Naive thymus-derived CD8-positive, alpha-beta T cell (primary cell): ENCODE measurements at regions of chr6 and their contacts with region 1.

Region 1: DNA sequence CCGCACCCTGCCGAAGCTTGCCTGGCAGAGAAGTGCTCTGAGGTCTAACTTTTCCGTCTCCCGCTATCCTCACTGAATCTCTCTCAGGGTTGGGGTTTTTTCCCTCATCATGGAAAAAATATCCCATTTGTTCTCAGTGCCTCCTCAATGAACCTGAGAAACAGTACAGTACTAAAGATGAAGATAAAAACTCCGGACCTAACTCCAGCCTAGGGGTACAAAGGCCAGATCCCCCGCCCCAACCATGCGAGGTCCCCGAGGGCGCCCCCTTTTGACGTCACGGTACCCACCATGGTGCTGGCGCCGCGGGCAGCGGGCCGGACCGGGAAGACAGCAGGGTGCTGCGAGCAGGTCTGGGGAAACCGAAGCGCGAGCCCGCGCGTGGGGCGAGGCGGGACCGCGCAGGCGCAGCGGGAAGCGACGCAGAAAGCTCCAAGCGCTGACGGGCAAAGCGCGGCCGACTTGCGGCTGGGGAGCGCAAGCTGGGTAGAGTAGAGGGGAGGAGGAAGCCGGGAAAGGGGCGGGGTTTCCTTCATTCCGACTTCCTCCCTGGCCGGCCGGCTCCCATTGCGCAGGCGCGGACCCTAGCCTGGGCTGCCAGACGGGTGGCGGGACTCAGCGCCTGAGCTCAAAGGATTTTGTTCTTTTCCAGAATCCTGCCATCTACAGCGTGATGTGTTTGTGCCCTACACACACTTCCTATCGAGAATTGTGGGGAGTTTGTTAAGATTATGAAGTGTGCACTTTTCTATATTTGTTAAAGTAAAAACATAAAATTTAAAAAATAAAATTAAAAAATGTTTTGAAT is at the start of gene LSM2:
- DNase-seq: peak; percentile 95 to 98 (median 96)
- ATAC-seq: peak; percentile 97 to 98
- H3K4me3 Mint-ChIP-seq: peak within 1 kb of the TSS; percentile 84 to 97 (median 91)
- H3K27ac Mint-ChIP-seq: peak within 1 kb of the TSS; percentile 91 to 98 (median 94)
- H3K4me1 Mint-ChIP-seq: peaks cover 10 to 35% (median 20%) of the 10 kb centered on the region in 4 donors
- H3K27me3 Mint-ChIP-seq: no peaks in the 10 kb centered on the region
- polyA plus RNA-seq, gene LSM2: 67.1 to 80.3 (median 77.9) TPM

Region 2: GRCh38 chr6:31795616-31796298 is 10.9 kb before region 1 on chr6 and contains the start of gene VARS1:
- POLR2A ChIA-PET with region 1: interaction called, 63 read pairs
- DNase-seq: peak; percentile 63 to 91 (median 84)
- ATAC-seq: peak; percentile 86 to 87
- H3K4me3 Mint-ChIP-seq: peak within 1 kb of the TSS; percentile 88 to 97 (median 94)
- H3K27ac Mint-ChIP-seq: peak within 1 kb of the TSS; percentile 96 to 99 (median 98)
- H3K4me1 Mint-ChIP-seq: peaks cover 19 to 47% (median 46%) of the 10 kb centered on the region in 4 donors
- H3K27me3 Mint-ChIP-seq: no peaks in the 10 kb centered on the region
- polyA plus RNA-seq, gene VARS1: 27.5 to 37.8 (median 30.3) TPM